H1 (cell line): ENCODE measurements at regions of chr5 and their contacts with region 1.

Region 1: GRCh38 chr5:168696611-168697010 is 117.4 kb upstream of the PANK3 start:
- DNase-seq: no peak
- H3K4me3 ChIP-seq: no peak overlapping the region
- H3K27ac ChIP-seq: no peak overlapping the region
- H3K4me1 ChIP-seq: peaks cover 0 to 2% (median 0%) of the 10 kb centered on the region in 4 experiments; a peak in 1 of 7 replicates
- H3K27me3 ChIP-seq: no peaks in the 10 kb centered on the region
- CTCF ChIP-seq: no peak
- EP300 ChIP-seq: no peak
- POLR2A ChIP-seq: no peak
- RAD21 ChIP-seq: no peak

Region 2: GRCh38 chr5:168679515-168679920 is 17.1 kb before region 1 on chr5:
- CTCF ChIA-PET with region 1: interaction called, 18 read pairs
- POLR2A ChIA-PET with region 1: no interaction called
- DNase-seq: peak; percentile 77 to 92
- H3K4me3 ChIP-seq: no peak overlapping the region
- H3K27ac ChIP-seq: no peak overlapping the region
- H3K4me1 ChIP-seq: no peaks in the 10 kb centered on the region; a peak in 1 of 7 replicates
- H3K27me3 ChIP-seq: no peaks in the 10 kb centered on the region
- CTCF ChIP-seq: peak; percentile 58 to 96 (median 85)
- EP300 ChIP-seq: no peak
- POLR2A ChIP-seq: no peak
- RAD21 ChIP-seq: peak; percentile 96 to 97